Heart right ventricle (tissue), 16 donors: ENCODE measurements at regions of chr12 and their contacts with region 1.

Region 1: GRCh38 chr12:94149119-94149780 is 873 bp downstream of the PLXNC1 start:
- DNase-seq: peak; percentile 20 to 45
- ATAC-seq: peak; percentile 14 to 65 (median 40)
- H3K4me3 ChIP-seq: peak overlapping the region; percentile 40 to 78 (median 66)
- H3K27ac ChIP-seq: peak overlapping the region in 3 of 10 donors; percentile 9 to 87 (median 26)
- H3K4me1 ChIP-seq: peaks cover 5 to 52% (median 18%) of the 10 kb centered on the region in 9 donors
- H3K27me3 ChIP-seq: peaks cover 0 to 27% (median 12%) of the 10 kb centered on the region in 7 donors
- CTCF ChIP-seq: peak in 7 of 9 donors; percentile 24 to 57 (median 49)

Region 2: GRCh38 chr12:94262228-94263010 is 113.2 kb after region 1 on chr12:
- intact Hi-C with region 1: loop called in 1 of 10 experiments (anchors 10 kb)
- DNase-seq: peak; percentile 80 to 84
- ATAC-seq: peak; percentile 78 to 92 (median 86)
- H3K4me3 ChIP-seq: peak overlapping the region in 9 of 10 donors; percentile 14 to 64 (median 58)
- H3K27ac ChIP-seq: peak overlapping the region; percentile 8 to 94 (median 85)
- H3K4me1 ChIP-seq: peaks cover 0 to 71% (median 38%) of the 10 kb centered on the region in 9 donors
- H3K27me3 ChIP-seq: no peaks in the 10 kb centered on the region
- CTCF ChIP-seq: no peak

Region 3: DNA sequence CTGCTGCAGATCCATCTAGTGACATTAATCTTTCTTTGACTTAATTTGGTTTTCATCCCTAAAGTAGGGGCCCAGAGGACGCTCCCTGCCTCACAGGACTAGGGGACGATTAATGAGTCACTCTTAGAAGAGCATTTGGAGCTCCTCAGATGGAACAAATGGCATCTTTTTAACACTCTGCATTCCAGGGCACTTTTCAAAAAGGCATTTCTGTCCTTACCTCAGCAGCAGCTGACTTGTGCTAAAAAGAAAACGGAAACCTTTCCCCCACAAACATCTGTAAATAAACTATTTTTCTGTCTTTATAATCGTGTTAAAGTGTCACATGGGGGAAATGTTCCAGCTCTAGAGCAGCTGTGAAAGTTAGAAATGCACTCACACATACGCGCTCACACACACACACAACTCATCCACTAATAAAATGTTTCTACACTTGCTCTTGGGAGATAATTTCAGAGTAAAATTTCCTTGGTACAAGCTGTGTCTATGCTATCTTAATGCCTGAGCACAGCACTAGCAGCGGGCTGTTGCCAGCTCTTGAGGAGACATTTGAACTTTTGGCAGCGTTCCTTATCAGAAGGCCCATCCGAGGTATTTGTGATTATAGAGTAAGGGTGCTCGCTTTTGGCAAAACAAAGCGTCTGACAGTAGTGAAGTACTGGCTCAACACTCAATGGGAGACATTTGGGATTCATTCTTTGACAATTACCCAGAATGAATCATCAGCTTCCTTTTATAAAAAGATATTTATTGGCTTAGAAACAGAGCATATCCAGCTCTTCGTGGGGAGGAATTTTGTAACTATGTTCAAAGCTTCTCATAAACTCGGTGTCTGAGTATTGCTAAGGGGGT is 140.4 kb after region 1 on chr12:
- intact Hi-C with region 1: loop called in 4 of 10 experiments (anchors 10 kb)
- DNase-seq: no peak
- ATAC-seq: peak; percentile 46 to 76 (median 64)
- H3K4me3 ChIP-seq: peak overlapping the region in 1 of 10 donors; percentile 13
- H3K27ac ChIP-seq: peak overlapping the region; percentile 12 to 78 (median 66)
- H3K4me1 ChIP-seq: peaks cover 4 to 33% (median 23%) of the 10 kb centered on the region in 9 donors
- H3K27me3 ChIP-seq: no peaks in the 10 kb centered on the region
- CTCF ChIP-seq: no peak

Region 4: DNA sequence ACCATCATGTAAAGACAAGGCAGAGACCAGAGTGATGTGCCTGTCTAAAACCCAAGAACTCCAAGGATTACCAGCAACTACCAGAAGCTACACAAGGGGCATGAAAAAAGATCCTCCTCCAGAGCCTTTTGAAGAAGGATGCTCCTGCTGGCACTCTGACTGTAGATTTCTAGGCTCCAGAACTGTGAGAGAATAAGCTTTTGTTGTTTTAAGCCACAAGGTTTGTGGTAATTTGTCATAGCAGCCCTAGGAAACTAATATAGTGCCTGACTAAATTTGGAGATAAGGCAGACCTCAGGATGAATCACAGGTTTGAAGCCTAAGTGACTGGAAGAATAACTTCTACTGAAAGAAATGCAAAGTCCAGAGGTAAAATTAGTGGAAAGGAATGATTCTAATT is 177.5 kb after region 1 on chr12:
- intact Hi-C with region 1: no loop called
- DNase-seq: no peak
- ATAC-seq: no peak
- H3K4me3 ChIP-seq: no peak overlapping the region
- H3K27ac ChIP-seq: no peak overlapping the region
- H3K4me1 ChIP-seq: peaks cover 0 to 4% (median 0%) of the 10 kb centered on the region in 9 donors
- H3K27me3 ChIP-seq: no peaks in the 10 kb centered on the region
- CTCF ChIP-seq: no peak

Region 5: DNA sequence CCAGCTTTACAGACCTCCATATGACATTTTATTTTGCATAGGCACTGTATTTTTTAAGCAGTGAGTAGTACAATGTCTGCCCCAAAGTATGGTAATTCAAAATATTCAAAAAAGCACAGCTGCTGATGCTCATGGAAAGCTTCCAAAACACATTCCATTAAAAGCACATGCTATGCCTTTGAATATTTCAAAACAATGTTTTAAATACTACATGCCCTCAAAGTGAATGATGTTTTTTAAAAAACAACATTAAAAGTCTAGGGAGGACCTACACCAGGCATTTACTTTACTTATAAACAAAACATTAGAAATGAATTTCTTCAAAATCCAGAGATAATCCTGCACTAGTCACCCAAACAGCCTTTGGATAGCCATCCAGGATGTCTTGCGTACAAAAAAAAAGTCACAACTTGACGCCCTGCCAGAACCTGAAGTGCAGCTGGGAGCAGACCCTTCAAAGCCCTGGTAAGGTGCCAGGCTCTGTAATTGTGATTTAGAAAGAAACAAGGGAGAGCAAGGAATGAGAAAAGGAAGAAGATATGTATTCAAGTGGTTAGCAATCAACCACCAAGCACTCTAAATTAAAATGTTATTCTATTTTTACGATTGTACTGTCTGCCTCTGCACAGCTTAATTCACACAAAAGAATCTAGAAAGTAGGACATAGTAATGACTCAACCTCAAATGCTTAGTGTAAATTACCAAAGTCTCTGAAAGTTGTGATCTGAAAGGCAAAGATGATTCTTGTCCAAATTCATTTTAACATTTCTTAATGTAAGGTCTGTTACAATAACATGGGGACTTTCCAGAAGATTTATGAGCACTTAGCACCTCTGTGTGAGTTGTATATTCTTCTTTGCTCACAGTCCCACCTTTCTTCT is 278.5 kb after region 1 on chr12:
- intact Hi-C with region 1: loop called in 6 of 10 experiments (anchors 5 to 10 kb)
- DNase-seq: peak in 1 of 2 donors; percentile 48
- ATAC-seq: peak in 7 of 8 donors; percentile 57 to 83 (median 73)
- H3K4me3 ChIP-seq: peak overlapping the region in 3 of 10 donors; percentile 1 to 10 (median 5)
- H3K27ac ChIP-seq: peak overlapping the region in 6 of 10 donors; percentile 21 to 41 (median 28)
- H3K4me1 ChIP-seq: peaks cover 0 to 23% (median 14%) of the 10 kb centered on the region in 9 donors
- H3K27me3 ChIP-seq: no peaks in the 10 kb centered on the region
- CTCF ChIP-seq: no peak

Region 6: GRCh38 chr12:94435511-94435927 is 286.3 kb after region 1 on chr12:
- intact Hi-C with region 1: loop called in 7 of 10 experiments (anchors 2 to 10 kb)
- DNase-seq: no peak
- ATAC-seq: peak in 7 of 8 donors; percentile 10 to 64 (median 25)
- H3K4me3 ChIP-seq: no peak overlapping the region
- H3K27ac ChIP-seq: no peak overlapping the region
- H3K4me1 ChIP-seq: peaks cover 0 to 15% (median 8%) of the 10 kb centered on the region in 9 donors
- H3K27me3 ChIP-seq: no peaks in the 10 kb centered on the region
- CTCF ChIP-seq: no peak

Region 7: GRCh38 chr12:94532490-94533422 is 383.5 kb after region 1 on chr12:
- intact Hi-C with region 1: loop called in 6 of 10 experiments (anchors 5 kb)
- DNase-seq: peak; percentile 68 to 70
- ATAC-seq: peak; percentile 75 to 92 (median 83)
- H3K4me3 ChIP-seq: no peak overlapping the region
- H3K27ac ChIP-seq: no peak overlapping the region
- H3K4me1 ChIP-seq: peaks cover 0 to 4% (median 0%) of the 10 kb centered on the region in 9 donors
- H3K27me3 ChIP-seq: peaks cover 0 to 3% (median 0%) of the 10 kb centered on the region in 7 donors
- CTCF ChIP-seq: peak; percentile 55 to 91 (median 85)

Region 8: DNA sequence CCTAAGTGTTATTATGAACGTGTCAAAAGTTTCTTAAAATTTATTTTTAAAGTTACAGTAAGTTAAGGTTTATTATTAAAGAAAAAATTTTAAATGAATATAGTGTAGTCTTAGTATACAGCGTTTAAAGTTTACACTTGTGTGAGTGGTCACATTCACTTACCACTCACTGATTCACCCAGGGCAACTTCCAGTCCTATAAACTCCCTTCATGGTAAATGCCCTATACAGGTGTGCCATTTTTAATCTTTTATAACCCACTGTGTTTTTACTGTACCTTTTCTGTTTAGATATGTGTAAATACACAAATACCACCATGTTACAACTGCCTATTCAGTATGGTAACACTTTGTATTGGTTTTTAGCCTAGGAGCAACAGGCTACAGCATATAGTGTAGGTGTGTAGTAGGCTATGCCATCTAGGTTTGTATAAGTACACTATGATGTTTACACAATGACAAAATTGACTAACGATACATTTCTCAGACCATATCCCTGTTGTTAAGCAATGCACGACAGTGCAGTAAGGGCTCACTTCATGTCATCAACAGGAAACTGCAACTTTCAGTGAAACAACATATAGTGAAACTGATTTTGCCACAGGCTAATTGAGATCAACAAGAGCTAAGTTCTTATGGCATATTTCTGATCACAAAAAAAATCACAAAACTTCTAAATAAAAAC is 613.2 kb after region 1 on chr12:
- intact Hi-C with region 1: loop called in 1 of 10 experiments (anchors 10 kb)
- DNase-seq: no peak
- ATAC-seq: no peak
- H3K4me3 ChIP-seq: no peak overlapping the region
- H3K27ac ChIP-seq: no peak overlapping the region
- H3K4me1 ChIP-seq: no peaks in the 10 kb centered on the region
- H3K27me3 ChIP-seq: peaks cover 0 to 6% (median 0%) of the 10 kb centered on the region in 7 donors
- CTCF ChIP-seq: no peak